ENCODE measurements at regions of chr19 and their contacts with region 1.

Region 1: DNA sequence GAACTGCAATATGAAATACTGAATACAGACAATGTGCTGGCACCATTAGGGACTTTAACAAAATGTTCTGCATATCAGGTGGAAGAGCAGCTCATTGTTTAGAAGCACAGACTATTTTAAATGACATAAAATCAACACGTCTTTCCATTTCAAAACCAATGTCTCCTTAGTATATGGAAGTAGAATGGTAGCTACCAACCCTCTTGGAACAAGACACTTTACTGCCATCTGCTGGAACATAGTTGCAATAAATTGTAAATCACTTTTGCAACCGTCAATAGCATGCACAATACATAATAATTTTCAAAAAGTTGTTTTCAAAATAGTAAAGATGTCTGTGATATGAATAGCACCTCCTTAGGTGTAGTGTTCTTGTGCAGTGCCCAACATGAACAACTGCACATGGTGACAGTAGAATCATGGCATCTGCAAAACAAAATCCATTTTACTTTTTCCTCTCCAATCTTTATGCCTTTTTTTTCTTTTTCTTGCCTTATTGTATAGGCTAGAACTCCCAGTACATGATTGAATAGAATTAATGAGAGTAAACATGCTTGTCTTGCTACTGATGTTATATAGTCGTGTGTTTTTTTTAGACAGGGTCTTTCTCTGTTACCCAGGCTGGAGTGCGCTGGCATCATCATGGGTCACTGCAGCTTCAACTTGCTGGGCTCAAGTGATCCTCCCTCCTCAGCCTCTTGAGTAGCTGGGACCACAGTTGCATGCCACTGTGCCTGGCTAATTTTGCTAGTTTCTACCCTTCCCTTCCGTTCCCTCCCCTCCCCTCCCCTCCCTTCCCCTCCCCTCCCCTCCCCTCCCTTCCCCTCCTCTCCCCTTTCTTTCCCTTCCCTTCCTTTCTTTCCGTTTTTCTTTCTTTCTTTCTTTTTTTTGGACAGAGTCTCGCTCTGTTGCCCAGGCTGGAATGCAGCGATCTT is 7.8 kb upstream of the LYPD5 start:
- DNase-seq: peak; percentile 58
- H3K4me3 ChIP-seq: no peak overlapping the region
- H3K27ac ChIP-seq: no peak overlapping the region
- H3K4me1 ChIP-seq: no peaks in the 10 kb centered on the region
- H3K27me3 ChIP-seq: no peaks in the 10 kb centered on the region
- CTCF ChIP-seq: peak; percentile 32 to 34
- POLR2A ChIP-seq: no peak

Region 2: GRCh38 chr19:43532962-43533545 is 277.0 kb before region 1 on chr19 and contains the start of gene ZNF575:
- CTCF ChIA-PET with region 1: interaction called, 17 read pairs
- POLR2A ChIA-PET with region 1: no interaction called
- dilution Hi-C with region 1: no loop called
- intact Hi-C with region 1: no loop called
- DNase-seq: peak; percentile 96
- H3K4me3 ChIP-seq: peak within 1 kb of the TSS; percentile 22 to 61 (median 31)
- H3K27ac ChIP-seq: peak within 1 kb of the TSS; percentile 32
- H3K4me1 ChIP-seq: peaks cover 10% of the 10 kb centered on the region
- H3K27me3 ChIP-seq: no peaks in the 10 kb centered on the region
- CTCF ChIP-seq: no peak
- POLR2A ChIP-seq: no peak
- total RNA-seq, gene ZNF575: 1.4 and 3.0 TPM in 2 replicates

Region 3: GRCh38 chr19:43595999-43596841 is 213.8 kb before region 1 on chr19 and contains the starts of genes IRGQ and ZNF576:
- CTCF ChIA-PET with region 1: interaction called, 13 read pairs
- POLR2A ChIA-PET with region 1: no interaction called
- dilution Hi-C with region 1: no loop called
- intact Hi-C with region 1: no loop called
- DNase-seq: peak; percentile 100
- H3K4me3 ChIP-seq: peak within 1 kb of the TSS; percentile 69 to 89 (median 74)
- H3K27ac ChIP-seq: peak within 1 kb of the TSS; percentile 96
- H3K4me1 ChIP-seq: peaks cover 24% of the 10 kb centered on the region
- H3K27me3 ChIP-seq: no peaks in the 10 kb centered on the region
- CTCF ChIP-seq: no peak
- POLR2A ChIP-seq: peak; percentile 81
- total RNA-seq, gene IRGQ: 33.2 and 34.1 TPM in 2 replicates
- total RNA-seq, gene ZNF576: 19.5 and 20.3 TPM in 2 replicates

Region 4: DNA sequence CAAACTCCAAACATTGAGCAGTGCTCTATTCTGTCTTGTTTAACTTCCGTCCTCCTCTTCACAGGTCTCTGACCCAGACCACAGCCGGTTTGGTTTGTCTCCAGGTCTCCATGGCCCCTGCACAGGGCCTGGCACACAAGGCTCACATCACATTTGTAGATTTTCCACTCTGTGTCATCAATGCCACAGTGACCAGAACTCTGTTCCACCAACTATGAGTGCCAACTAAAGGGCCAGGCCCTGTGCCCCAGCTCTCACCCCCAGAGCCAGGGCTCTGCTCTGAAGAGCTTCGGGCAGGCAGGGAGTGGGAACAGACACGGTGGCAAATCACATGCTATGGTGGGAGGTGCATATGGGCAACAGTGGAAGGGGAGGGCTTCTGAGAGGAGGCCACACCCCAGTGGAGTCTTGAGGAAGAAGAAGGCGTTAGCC is 71.2 kb before region 1 on chr19:
- CTCF ChIA-PET with region 1: interaction called, 12 read pairs
- POLR2A ChIA-PET with region 1: no interaction called
- dilution Hi-C with region 1: no loop called
- intact Hi-C with region 1: no loop called
- DNase-seq: no peak
- H3K4me3 ChIP-seq: no peak overlapping the region
- H3K27ac ChIP-seq: no peak overlapping the region
- H3K4me1 ChIP-seq: peaks cover 3% of the 10 kb centered on the region
- H3K27me3 ChIP-seq: no peaks in the 10 kb centered on the region
- CTCF ChIP-seq: no peak
- POLR2A ChIP-seq: no peak

Region 5: DNA sequence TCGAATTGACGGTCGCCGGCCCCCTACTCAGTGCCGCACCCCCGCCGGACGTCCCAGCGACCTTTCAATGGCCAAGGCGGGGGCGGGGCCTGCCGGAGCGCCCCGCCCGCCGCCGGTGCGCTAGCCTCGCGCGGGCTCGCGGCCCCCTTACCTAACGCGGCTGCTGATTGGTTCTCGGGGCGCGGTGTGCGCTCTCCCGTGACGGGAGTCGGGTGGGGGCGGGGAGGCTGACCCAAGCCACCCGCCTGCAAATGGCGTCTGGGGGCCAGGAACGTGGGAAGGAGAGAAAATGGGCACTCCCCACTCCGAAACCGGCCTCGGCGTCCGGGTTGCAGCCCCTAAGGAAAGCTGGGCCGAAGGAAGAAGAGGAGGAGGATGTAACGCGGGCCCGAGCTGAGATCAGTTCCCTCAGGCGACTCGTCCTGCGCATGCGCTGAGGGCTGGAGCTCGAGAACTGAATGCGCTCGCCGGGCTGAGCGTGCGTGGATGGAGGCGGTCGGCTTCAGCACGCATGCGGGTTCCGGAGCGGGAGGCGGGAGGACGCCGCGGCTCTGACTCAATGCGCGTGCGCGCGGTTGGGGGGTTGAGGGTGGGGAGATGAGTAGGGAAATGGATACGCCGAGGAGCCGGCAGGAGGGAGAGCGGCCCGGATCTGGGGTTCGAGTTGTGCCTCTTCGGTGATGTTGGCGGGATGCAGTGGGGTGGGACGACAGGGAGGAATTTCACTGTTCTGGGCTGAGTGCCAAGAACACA is 55.4 kb before region 1 on chr19 and contains the start of gene SMG9:
- CTCF ChIA-PET with region 1: interaction called, 12 read pairs
- POLR2A ChIA-PET with region 1: no interaction called
- dilution Hi-C with region 1: no loop called
- intact Hi-C with region 1: no loop called
- DNase-seq: peak; percentile 99
- H3K4me3 ChIP-seq: peak within 1 kb of the TSS; percentile 67 to 92 (median 74)
- H3K27ac ChIP-seq: peak within 1 kb of the TSS; percentile 97
- H3K4me1 ChIP-seq: peaks cover 34% of the 10 kb centered on the region
- H3K27me3 ChIP-seq: no peaks in the 10 kb centered on the region
- CTCF ChIP-seq: no peak
- POLR2A ChIP-seq: peak; percentile 50
- total RNA-seq, gene SMG9: 45.0 and 53.3 TPM in 2 replicates

Region 6: DNA sequence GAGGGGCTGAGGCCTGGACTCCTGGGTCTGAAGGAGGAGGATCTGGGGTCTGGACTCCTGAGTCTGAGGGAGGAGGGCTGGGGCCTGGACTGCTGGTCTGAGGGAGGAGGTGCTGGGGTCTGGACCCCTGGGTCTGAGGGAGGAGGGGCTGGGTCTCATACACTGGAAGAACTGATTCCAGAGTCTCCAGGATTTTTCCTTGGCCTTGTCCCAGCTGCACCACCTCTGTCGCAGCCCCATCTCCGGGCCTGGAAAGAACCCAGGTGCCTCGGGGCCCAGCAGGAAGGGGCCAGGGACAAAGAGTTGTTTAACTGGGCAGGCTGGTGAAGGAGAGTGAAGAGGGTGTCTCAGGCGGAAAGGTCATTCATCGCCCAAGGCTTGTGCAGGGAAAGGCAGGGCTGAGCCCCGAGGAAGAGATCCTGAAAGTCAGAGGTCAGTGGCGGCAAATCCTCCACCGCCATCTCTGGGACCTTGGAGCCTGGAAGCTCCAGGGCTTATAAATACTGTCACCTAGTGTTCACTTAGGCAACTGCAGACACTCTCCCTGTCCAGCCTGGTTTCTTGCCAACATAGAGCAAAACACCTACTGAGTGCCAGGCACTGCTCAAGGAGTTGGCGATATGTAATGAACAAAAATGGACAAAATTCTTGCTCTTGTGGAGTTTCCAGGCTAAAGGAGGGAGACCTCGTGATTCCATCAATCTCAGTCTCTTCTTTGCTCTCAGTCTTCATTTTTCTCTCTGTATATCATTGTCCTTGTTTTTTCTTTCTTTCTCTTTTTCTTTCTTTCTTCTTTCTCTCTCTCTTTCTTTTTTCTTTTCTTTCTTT is 24.8 kb before region 1 on chr19:
- CTCF ChIA-PET with region 1: interaction called, 13 read pairs
- POLR2A ChIA-PET with region 1: no interaction called
- dilution Hi-C with region 1: no loop called
- intact Hi-C with region 1: no loop called
- DNase-seq: peak; percentile 73
- H3K4me3 ChIP-seq: no peak overlapping the region
- H3K27ac ChIP-seq: no peak overlapping the region
- H3K4me1 ChIP-seq: peaks cover 10% of the 10 kb centered on the region
- H3K27me3 ChIP-seq: no peaks in the 10 kb centered on the region
- CTCF ChIP-seq: peak; percentile 97 to 98
- POLR2A ChIP-seq: no peak

Region 7: GRCh38 chr19:43826787-43827754 is 17.0 kb after region 1 on chr19 and contains the start of gene ZNF283:
- CTCF ChIA-PET with region 1: interaction called, 11 read pairs
- POLR2A ChIA-PET with region 1: interaction called, 6 read pairs
- dilution Hi-C with region 1: no loop called
- intact Hi-C with region 1: no loop called
- DNase-seq: peak; percentile 79
- H3K4me3 ChIP-seq: peak within 1 kb of the TSS; percentile 68 to 94 (median 71)
- H3K27ac ChIP-seq: no peak within 1 kb of the TSS
- H3K4me1 ChIP-seq: peaks cover 4% of the 10 kb centered on the region
- H3K27me3 ChIP-seq: peaks cover 0 to 3% of the 10 kb centered on the region in 2 experiments
- CTCF ChIP-seq: no peak
- POLR2A ChIP-seq: peak; percentile 72
- total RNA-seq, gene ZNF283: 6.0 and 10.7 TPM in 2 replicates

Region 8: GRCh38 chr19:43872547-43873336 is 62.7 kb after region 1 on chr19:
- CTCF ChIA-PET with region 1: no interaction called
- POLR2A ChIA-PET with region 1: no interaction called
- dilution Hi-C with region 1: no loop called
- intact Hi-C with region 1: no loop called
- DNase-seq: peak; percentile 3
- H3K4me3 ChIP-seq: no peak overlapping the region
- H3K27ac ChIP-seq: no peak overlapping the region
- H3K4me1 ChIP-seq: no peaks in the 10 kb centered on the region
- H3K27me3 ChIP-seq: no peaks in the 10 kb centered on the region
- CTCF ChIP-seq: no peak
- POLR2A ChIP-seq: no peak

Measured in endothelial cell of umbilical vein (primary cell).